ENCODE measurements at regions of chr5 and their contacts with region 1.

Region 1: GRCh38 chr5:93607367-93608258 is 24.6 kb downstream of the NR2F1 start:
- DNase-seq: no peak
- ATAC-seq: peak; percentile 57

Region 2: GRCh38 chr5:93433392-93433791 is 174.2 kb before region 1 on chr5:
- intact Hi-C with region 1: no loop called
- DNase-seq: no peak
- ATAC-seq: no peak

Region 3: DNA sequence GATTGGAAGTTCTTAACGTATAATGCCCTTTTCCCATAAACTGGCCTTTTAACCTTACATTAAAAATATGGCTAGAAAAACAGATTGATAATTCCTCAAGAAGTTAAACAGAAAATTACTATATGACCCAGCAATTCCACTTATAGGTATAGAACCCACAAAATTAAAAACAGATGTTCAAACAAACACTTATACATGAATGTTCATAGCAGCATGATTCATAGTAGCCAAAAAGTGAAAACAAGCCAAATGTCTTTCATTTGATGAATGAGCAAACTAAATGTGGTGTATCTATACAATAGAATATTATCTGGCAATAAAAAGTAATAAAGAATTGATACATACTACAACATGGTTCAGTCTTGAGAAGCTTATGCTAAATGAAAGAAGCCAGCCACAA is 98.3 kb after region 1 on chr5:
- intact Hi-C with region 1: no loop called
- DNase-seq: no peak
- ATAC-seq: no peak

Region 4: GRCh38 chr5:93800988-93801811 is 193.6 kb after region 1 on chr5:
- intact Hi-C with region 1: loop called (anchors 5 kb)
- DNase-seq: no peak
- ATAC-seq: no peak